ENCODE measurements at regions of chr15 and their contacts with region 1.

Region 1: DNA sequence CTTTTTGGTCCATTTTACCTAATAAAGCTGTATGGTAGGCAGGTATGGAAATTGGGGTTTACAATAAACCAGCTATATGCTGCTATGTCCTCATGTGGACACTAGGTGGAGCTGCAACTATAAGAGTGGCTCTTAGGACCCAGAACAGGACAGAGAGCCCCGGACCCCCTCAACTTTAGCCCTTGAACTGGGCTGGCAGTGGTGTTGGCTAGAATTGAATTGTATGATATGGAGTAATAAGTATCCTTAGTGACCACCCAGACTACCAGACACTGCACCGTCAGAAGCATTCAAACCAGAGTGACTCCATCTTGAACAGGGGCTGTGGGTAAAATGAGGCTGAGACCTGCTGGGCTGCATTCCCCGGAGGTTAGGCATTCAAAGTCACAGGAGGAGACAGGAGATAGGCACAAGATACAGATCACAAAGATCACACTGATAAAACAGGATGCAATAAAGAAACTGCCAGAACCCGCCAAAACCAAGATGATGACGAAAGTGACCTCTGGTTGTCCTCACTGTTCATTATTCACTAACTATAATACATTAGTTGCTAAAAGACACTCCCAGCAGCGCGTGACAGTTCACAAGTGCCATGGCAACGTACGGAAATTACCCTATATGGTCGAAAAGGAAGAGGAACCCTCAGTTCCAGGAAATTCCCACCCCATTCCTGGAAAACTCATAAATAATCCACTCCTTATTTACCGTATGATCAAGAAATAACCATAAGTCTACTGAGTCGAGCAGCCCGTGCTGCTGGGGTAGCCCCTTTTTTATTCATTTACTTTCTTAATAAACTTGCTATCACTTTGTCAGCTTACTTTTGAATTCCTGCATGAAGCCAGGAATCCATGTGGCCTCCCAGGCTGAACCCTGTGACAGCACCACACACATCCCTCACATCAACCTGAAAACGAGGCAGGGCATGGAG is 68.7 kb upstream of the BLM start:
- DNase-seq: peak; percentile 88
- H3K4me3 ChIP-seq: no peak overlapping the region
- H3K27ac ChIP-seq: peak overlapping the region; percentile 97
- H3K4me1 ChIP-seq: peaks cover 30% of the 10 kb centered on the region
- H3K27me3 ChIP-seq: no peaks in the 10 kb centered on the region
- CTCF ChIP-seq: peak; percentile 70 to 82
- POLR2A ChIP-seq: peak; percentile 50

Region 2: GRCh38 chr15:89566141-89566540 is 1082.3 kb before region 1 on chr15:
- CTCF ChIA-PET with region 1: no interaction called
- POLR2A ChIA-PET with region 1: no interaction called
- dilution Hi-C with region 1: no loop called
- intact Hi-C with region 1: no loop called
- DNase-seq: no peak
- H3K4me3 ChIP-seq: no peak overlapping the region
- H3K27ac ChIP-seq: no peak overlapping the region
- H3K4me1 ChIP-seq: no peaks in the 10 kb centered on the region
- H3K27me3 ChIP-seq: peaks cover 0 to 2% of the 10 kb centered on the region in 2 experiments
- CTCF ChIP-seq: no peak
- POLR2A ChIP-seq: no peak

Region 3: GRCh38 chr15:90561344-90562244 is 86.8 kb before region 1 on chr15:
- CTCF ChIA-PET with region 1: no interaction called
- POLR2A ChIA-PET with region 1: no interaction called
- dilution Hi-C with region 1: no loop called
- intact Hi-C with region 1: no loop called
- DNase-seq: no peak
- H3K4me3 ChIP-seq: no peak overlapping the region
- H3K27ac ChIP-seq: no peak overlapping the region
- H3K4me1 ChIP-seq: peaks cover 16% of the 10 kb centered on the region
- H3K27me3 ChIP-seq: no peaks in the 10 kb centered on the region
- CTCF ChIP-seq: no peak
- POLR2A ChIP-seq: no peak

Region 4: GRCh38 chr15:90629217-90629616 is 19.2 kb before region 1 on chr15:
- CTCF ChIA-PET with region 1: no interaction called
- POLR2A ChIA-PET with region 1: no interaction called
- dilution Hi-C with region 1: no loop called
- intact Hi-C with region 1: no loop called
- DNase-seq: no peak
- H3K4me3 ChIP-seq: no peak overlapping the region
- H3K27ac ChIP-seq: no peak overlapping the region
- H3K4me1 ChIP-seq: no peaks in the 10 kb centered on the region
- H3K27me3 ChIP-seq: no peaks in the 10 kb centered on the region
- CTCF ChIP-seq: no peak
- POLR2A ChIP-seq: no peak

Region 5: DNA sequence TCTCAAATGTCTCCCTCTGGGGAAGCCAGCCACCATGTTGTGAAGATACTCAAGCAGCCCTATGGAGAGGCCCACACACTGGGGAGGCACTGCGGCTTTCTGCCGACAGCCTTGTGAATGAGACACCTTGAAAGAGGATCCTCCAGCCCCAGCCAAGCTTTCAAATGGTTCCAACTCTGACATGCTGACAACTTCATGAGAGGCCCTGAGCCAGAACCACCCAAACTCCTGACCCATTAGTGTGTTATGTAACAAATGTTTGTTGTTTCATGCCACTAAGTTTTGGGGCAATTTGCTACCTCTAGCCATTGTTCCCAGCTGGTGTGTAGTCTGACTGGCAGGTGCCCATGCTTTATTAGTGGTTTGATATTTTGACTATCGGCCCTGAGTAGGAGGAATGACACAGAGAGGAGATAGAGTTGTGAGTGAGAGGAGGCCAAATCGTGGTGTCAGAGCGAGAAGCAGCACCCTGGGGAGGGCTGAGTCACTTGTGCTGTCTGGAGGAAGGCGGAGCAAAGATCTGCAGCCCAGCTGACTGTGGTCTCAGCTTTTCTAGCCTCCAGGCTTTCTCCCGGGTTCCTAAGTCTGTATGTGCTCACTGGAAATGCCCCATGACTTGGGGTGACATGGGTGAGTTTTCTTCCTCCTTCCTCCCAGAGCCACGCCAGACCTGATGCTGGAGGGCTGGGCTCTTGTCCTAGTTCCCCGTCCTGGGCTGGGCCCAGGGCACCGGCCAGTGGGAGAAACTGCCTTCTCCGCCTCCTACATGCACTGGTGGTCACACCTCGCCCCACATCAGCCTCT is 12.0 kb after region 1 on chr15:
- CTCF ChIA-PET with region 1: interaction called, 13 read pairs
- POLR2A ChIA-PET with region 1: interaction called, 7 read pairs
- dilution Hi-C with region 1: no loop called
- intact Hi-C with region 1: loop called (anchors 1 kb)
- DNase-seq: no peak
- H3K4me3 ChIP-seq: no peak overlapping the region
- H3K27ac ChIP-seq: no peak overlapping the region
- H3K4me1 ChIP-seq: no peaks in the 10 kb centered on the region
- H3K27me3 ChIP-seq: no peaks in the 10 kb centered on the region
- CTCF ChIP-seq: no peak
- POLR2A ChIP-seq: no peak

Region 6: DNA sequence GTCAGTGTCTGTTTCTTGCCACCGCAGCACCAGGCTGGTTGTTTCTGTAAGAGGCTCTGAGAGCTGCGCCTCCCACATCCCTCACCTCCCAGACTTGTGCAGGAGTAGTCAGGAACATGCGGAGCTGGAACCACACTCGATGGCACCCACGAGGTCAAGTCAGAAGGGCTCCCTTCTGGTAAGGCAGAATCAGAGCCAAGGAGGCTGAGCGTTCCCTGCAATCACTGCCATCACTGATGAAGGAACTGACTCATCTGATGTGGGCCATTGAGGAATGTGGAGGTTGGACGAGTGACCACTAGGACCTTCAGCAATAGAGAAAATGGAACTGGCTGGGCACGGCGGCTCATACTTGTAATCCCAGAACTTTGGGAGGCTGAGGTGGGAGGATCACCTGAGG is 33.1 kb after region 1 on chr15:
- CTCF ChIA-PET with region 1: interaction called, 10 read pairs
- POLR2A ChIA-PET with region 1: no interaction called
- dilution Hi-C with region 1: no loop called
- intact Hi-C with region 1: no loop called
- DNase-seq: peak; percentile 28
- H3K4me3 ChIP-seq: no peak overlapping the region
- H3K27ac ChIP-seq: peak overlapping the region; percentile 23
- H3K4me1 ChIP-seq: peaks cover 7% of the 10 kb centered on the region
- H3K27me3 ChIP-seq: no peaks in the 10 kb centered on the region
- CTCF ChIP-seq: no peak
- POLR2A ChIP-seq: no peak

Region 7: DNA sequence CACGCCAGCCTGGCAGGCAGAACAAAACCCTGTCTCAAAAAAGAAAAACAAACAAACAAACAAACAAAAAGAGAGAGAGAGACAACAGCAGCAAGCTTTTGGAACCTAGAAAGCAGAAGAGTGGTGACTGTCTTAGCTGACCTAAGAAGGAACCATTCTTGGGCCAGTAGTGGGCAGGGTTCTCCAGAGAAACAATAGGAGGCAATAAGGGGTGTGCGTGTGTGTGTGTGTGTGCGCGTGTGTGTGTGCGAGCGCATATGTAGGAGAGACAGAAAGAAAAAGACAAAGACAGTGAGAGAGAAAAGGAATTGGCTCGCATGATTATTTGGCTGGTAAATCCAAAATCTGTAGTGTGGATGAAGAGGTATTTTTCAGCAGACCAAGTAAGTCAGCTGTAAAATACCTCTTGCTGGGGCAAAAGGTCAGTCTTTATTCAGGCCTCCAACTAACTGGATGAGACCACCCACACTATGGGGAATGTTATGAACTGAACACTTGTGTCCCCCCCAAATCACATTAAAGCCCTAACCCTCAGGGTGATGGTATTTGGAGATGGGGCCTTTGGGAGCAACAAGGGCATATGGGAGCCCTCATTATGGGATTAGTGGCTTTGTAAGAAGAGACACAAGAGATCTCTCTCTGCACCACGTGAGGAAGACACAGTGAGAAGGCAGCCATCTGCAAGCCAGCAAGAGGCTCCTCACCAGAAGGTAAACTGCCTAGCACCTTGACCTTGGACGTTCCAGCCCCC is 53.7 kb after region 1 on chr15:
- CTCF ChIA-PET with region 1: interaction called, 11 read pairs
- POLR2A ChIA-PET with region 1: no interaction called
- dilution Hi-C with region 1: no loop called
- intact Hi-C with region 1: no loop called
- DNase-seq: no peak
- H3K4me3 ChIP-seq: no peak overlapping the region
- H3K27ac ChIP-seq: no peak overlapping the region
- H3K4me1 ChIP-seq: no peaks in the 10 kb centered on the region
- H3K27me3 ChIP-seq: no peaks in the 10 kb centered on the region
- CTCF ChIP-seq: no peak
- POLR2A ChIP-seq: no peak

Region 8: DNA sequence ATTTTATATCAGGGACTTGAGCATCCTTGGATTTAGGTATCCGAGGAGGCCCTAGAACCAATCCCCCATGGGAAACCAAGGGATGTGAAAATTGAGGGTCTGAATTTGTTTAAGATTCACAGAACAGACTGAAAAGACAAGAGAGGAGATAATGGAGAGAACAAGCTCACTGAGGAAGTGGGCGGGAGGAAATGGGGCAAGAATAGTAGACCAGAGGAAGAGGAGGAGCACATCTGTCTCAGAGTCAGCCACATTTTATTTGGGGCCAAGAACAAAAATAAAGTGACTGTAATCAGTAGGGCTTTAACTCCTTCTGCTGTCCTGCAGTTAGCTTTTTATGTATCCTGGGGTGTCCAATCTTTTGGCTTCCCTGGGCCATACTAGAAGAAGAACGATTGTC is 132.5 kb after region 1 on chr15:
- CTCF ChIA-PET with region 1: interaction called, 4 read pairs
- POLR2A ChIA-PET with region 1: no interaction called
- dilution Hi-C with region 1: no loop called
- intact Hi-C with region 1: loop called (anchors 10 kb)
- DNase-seq: no peak
- H3K4me3 ChIP-seq: no peak overlapping the region
- H3K27ac ChIP-seq: no peak overlapping the region
- H3K4me1 ChIP-seq: no peaks in the 10 kb centered on the region
- H3K27me3 ChIP-seq: no peaks in the 10 kb centered on the region
- CTCF ChIP-seq: no peak
- POLR2A ChIP-seq: no peak

Region 9: DNA sequence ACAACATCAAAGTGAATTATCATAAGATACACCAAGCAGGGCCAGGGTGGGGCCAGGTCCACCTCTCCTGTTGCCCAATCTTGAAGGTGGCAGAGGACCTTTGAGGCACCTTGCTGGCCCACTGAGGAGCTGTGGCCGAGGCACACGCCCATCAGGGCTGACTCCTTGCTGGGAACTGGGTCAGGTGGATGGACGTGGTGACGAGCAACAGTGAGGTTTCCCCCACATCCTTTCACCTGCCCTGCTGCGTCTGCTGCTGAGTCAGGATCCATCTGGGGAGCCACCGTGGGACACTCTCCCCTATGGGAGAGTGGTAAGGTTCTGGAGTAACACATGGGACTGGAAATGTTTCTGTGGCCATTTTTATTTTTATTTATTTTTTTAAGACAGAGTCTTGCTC is 202.7 kb after region 1 on chr15:
- CTCF ChIA-PET with region 1: no interaction called
- POLR2A ChIA-PET with region 1: no interaction called
- dilution Hi-C with region 1: no loop called
- intact Hi-C with region 1: no loop called
- DNase-seq: no peak
- H3K4me3 ChIP-seq: no peak overlapping the region
- H3K27ac ChIP-seq: no peak overlapping the region
- H3K4me1 ChIP-seq: no peaks in the 10 kb centered on the region
- H3K27me3 ChIP-seq: peaks cover 0 to 3% of the 10 kb centered on the region in 2 experiments
- CTCF ChIP-seq: no peak
- POLR2A ChIP-seq: no peak

Region 10: GRCh38 chr15:90902040-90902839 is 253.8 kb after region 1 on chr15:
- CTCF ChIA-PET with region 1: interaction called, 11 read pairs
- POLR2A ChIA-PET with region 1: interaction called, 3 read pairs
- dilution Hi-C with region 1: no loop called
- intact Hi-C with region 1: no loop called
- DNase-seq: peak; percentile 88
- H3K4me3 ChIP-seq: peak overlapping the region; percentile 53 to 79 (median 63)
- H3K27ac ChIP-seq: peak overlapping the region; percentile 51
- H3K4me1 ChIP-seq: peaks cover 17% of the 10 kb centered on the region
- H3K27me3 ChIP-seq: no peaks in the 10 kb centered on the region
- CTCF ChIP-seq: peak; percentile 66 to 77
- POLR2A ChIP-seq: peak; percentile 78